Colonic mucosa (tissue), 4 donors: ENCODE measurements at regions of chr1 and their contacts with region 1.

Region 1: DNA sequence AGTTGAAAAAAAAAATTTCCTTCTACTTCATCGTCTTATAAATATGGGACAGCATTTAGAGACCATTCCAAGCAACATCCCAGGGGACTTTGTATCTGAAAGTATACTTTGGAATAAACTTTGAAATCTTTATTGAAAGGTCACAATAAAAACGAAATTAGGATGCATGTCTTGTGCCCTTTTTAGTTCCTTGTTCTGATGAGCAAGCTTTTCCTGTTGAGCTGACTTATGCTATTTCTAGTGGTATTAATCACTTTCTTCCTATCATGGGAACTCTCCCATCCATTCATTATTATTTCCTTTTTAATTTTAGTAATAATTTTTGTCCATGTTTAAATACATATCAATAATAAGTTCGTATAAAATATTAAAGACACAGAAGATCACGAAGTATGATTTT is 4.0 kb upstream of the GBP2 start:
- DNase-seq: no peak
- H3K4me3 ChIP-seq: no peak overlapping the region
- H3K27ac ChIP-seq: peak overlapping the region; percentile 90
- H3K4me1 ChIP-seq: peaks cover 3% of the 10 kb centered on the region
- H3K27me3 ChIP-seq: no peaks in the 10 kb centered on the region
- CTCF ChIP-seq: no peak

Region 2: DNA sequence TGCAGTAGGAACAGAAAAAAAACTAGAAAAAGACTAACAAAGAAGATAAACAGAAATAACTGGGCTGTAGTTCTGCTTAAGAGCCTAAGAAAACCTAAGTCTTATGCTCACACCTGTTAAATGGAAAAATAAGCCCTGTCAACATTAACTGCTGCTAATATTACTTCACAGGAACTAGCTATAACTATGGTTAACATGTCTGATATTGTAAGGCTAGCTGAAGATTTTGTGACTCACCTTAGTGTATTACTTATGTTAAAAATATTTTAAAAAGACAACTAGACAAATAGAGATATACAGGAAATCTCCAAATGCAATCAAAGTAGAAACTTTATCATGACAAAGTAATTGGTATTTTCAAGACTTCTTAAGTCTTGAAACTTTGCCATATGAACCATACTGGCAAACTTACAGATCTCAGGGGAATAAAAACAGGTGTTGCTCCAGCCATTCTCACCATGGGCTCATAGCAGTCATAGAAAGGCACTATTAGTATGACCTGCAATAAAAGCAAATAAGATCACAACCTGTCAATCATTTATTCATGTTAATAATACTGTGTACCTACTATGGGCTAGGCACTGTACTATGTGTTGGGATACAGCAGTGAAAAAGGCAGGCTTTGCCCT is 168.2 kb before region 1 on chr1:
- intact Hi-C with region 1: no loop called
- DNase-seq: no peak
- H3K4me3 ChIP-seq: no peak overlapping the region
- H3K27ac ChIP-seq: no peak overlapping the region
- H3K4me1 ChIP-seq: no peaks in the 10 kb centered on the region
- H3K27me3 ChIP-seq: no peaks in the 10 kb centered on the region
- CTCF ChIP-seq: no peak

Region 3: DNA sequence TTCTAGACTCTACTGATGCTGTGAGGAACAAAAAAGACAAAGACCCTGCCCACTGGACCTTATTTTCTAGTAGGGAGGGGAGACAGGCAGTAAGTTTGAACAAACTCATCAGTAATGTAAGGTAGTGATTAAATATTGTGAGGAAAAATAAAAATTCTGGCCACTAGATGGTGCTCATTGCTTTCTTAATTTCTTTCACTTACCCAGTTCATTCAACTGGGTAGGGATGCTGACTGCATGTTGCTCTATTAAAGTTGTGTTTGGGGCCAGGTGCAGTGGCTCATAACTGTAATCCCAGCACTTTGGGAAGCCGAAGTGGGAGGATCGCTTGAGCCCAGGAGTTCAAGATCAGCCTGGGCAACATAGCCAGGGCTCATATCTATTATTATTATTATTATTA is 131.2 kb before region 1 on chr1:
- intact Hi-C with region 1: loop called (anchors 10 kb)
- DNase-seq: no peak
- H3K4me3 ChIP-seq: no peak overlapping the region
- H3K27ac ChIP-seq: no peak overlapping the region
- H3K4me1 ChIP-seq: no peaks in the 10 kb centered on the region
- H3K27me3 ChIP-seq: no peaks in the 10 kb centered on the region
- CTCF ChIP-seq: peak; percentile 17

Region 4: GRCh38 chr1:89065079-89065868 is 64.6 kb before region 1 on chr1 and contains the start of gene GBP1:
- intact Hi-C with region 1: loop called (anchors 10 kb)
- DNase-seq: no peak
- H3K4me3 ChIP-seq: peak within 1 kb of the TSS; percentile 50
- H3K27ac ChIP-seq: peak within 1 kb of the TSS; percentile 85
- H3K4me1 ChIP-seq: no peaks in the 10 kb centered on the region
- H3K27me3 ChIP-seq: no peaks in the 10 kb centered on the region
- CTCF ChIP-seq: no peak
- total RNA-seq, gene GBP1: 15.0 to 25.9 TPM

Region 5: GRCh38 chr1:89179343-89179742 is 49.4 kb after region 1 on chr1:
- intact Hi-C with region 1: no loop called
- DNase-seq: no peak
- H3K4me3 ChIP-seq: no peak overlapping the region
- H3K27ac ChIP-seq: no peak overlapping the region
- H3K4me1 ChIP-seq: no peaks in the 10 kb centered on the region
- H3K27me3 ChIP-seq: no peaks in the 10 kb centered on the region
- CTCF ChIP-seq: no peak

Region 6: DNA sequence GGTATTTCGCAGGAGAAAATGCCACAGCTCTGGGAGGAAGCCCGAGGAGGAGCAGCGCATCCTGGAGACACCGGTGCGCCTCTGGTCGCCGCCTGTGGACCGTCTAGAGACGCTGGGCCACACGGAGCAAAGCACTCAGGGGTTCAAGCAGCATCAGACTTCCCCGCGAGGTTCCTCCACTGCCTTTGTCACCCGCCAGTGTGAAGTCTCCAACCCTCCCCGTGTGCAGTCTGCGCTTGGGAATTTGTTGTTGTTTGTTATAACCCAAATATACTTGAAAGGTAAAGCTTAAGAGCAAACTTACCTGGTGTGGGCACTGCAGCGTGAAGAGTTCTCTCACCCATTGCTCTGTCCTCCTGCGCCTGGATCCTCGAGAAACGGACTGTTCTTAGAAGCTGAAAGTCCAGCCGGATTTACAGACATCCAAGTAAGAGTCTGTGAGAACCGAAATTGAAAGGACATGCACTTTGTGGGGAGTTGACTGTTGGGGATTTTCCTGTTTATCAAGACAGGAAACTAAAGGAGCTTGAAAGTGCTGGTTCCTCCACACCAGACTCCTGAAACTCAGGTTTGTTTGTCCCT is 68.7 kb after region 1 on chr1 and contains the start of gene GBP4:
- intact Hi-C with region 1: no loop called
- DNase-seq: peak; percentile 38
- H3K4me3 ChIP-seq: peak within 1 kb of the TSS; percentile 51
- H3K27ac ChIP-seq: peak within 1 kb of the TSS; percentile 76
- H3K4me1 ChIP-seq: no peaks in the 10 kb centered on the region
- H3K27me3 ChIP-seq: no peaks in the 10 kb centered on the region
- CTCF ChIP-seq: no peak
- total RNA-seq, gene GBP4: 2.1 to 4.9 TPM

Region 7: GRCh38 chr1:89701746-89702241 is 571.9 kb after region 1 on chr1:
- intact Hi-C with region 1: no loop called
- DNase-seq: no peak
- H3K4me3 ChIP-seq: no peak overlapping the region
- H3K27ac ChIP-seq: no peak overlapping the region
- H3K4me1 ChIP-seq: no peaks in the 10 kb centered on the region
- H3K27me3 ChIP-seq: no peaks in the 10 kb centered on the region
- CTCF ChIP-seq: no peak